Tibial artery (tissue), 4 donors: ENCODE measurements at regions of chr11 and their contacts with region 1.

Region 1: GRCh38 chr11:99260696-99261095 is 239.9 kb downstream of the CNTN5 start:
- DNase-seq: no peak
- H3K4me3 ChIP-seq: no peak overlapping the region
- H3K27ac ChIP-seq: no peak overlapping the region
- H3K4me1 ChIP-seq: no peaks in the 10 kb centered on the region
- H3K27me3 ChIP-seq: no peaks in the 10 kb centered on the region
- CTCF ChIP-seq: no peak

Region 2: GRCh38 chr11:99079576-99079975 is 181.1 kb before region 1 on chr11:
- intact Hi-C with region 1: no loop called
- DNase-seq: no peak
- H3K4me3 ChIP-seq: no peak overlapping the region
- H3K27ac ChIP-seq: no peak overlapping the region
- H3K4me1 ChIP-seq: no peaks in the 10 kb centered on the region
- H3K27me3 ChIP-seq: no peaks in the 10 kb centered on the region
- CTCF ChIP-seq: no peak

Region 3: GRCh38 chr11:99316776-99317520 is 56.3 kb after region 1 on chr11:
- intact Hi-C with region 1: loop called (anchors 2 kb)
- DNase-seq: no peak
- H3K4me3 ChIP-seq: no peak overlapping the region
- H3K27ac ChIP-seq: no peak overlapping the region
- H3K4me1 ChIP-seq: no peaks in the 10 kb centered on the region
- H3K27me3 ChIP-seq: no peaks in the 10 kb centered on the region
- CTCF ChIP-seq: no peak